Activated CD8-positive, alpha-beta T cell treated with anti-CD3 and anti-CD28 coated beads for 36 hours (primary cell): ENCODE measurements at regions of chr6 and their contacts with region 1.

Region 1: DNA sequence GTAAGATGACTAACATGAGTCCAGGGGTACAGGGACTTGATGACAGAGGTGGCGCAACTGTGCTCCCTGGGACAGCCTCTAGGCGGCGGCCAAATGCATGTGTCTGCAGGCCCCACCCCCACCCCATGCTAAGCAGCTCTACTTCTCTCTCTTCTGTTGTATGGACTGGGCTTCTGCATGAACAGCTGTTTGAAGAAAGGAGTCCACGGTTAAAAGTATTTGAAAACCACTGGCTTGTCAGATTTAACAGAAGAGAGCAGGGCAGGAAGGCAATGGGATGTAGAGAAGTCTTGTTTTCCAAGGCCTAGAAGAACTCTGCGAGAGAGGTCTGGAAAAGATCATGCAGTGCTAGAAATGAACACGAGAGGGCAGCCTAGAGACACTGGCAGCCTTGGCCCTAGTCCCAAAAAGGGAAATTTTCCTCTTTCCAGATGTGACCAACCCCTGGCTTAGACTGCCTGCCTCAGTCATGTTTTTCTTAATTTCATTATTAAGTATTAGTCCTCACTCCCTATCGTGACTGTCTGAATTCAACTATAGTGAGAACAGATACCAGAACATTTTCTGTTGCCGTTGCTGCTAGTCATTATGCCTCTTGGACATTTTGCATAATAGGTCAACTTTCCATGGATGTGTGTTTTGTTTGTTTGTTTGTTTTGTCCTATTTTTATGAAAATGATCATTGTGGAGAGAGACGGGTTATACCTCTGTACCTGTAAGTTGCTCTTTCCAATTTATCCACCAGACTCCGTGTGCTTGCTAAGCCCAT is 265.0 kb downstream of the ADGRG6 start:
- DNase-seq: peak; percentile 68
- ATAC-seq: peak; percentile 66
- H3K4me3 Mint-ChIP-seq: no peak overlapping the region
- H3K27ac Mint-ChIP-seq: no peak overlapping the region
- H3K4me1 Mint-ChIP-seq: peaks cover 53% of the 10 kb centered on the region
- H3K27me3 Mint-ChIP-seq: no peaks in the 10 kb centered on the region
- CTCF ChIP-seq: peak; percentile 93

Region 2: DNA sequence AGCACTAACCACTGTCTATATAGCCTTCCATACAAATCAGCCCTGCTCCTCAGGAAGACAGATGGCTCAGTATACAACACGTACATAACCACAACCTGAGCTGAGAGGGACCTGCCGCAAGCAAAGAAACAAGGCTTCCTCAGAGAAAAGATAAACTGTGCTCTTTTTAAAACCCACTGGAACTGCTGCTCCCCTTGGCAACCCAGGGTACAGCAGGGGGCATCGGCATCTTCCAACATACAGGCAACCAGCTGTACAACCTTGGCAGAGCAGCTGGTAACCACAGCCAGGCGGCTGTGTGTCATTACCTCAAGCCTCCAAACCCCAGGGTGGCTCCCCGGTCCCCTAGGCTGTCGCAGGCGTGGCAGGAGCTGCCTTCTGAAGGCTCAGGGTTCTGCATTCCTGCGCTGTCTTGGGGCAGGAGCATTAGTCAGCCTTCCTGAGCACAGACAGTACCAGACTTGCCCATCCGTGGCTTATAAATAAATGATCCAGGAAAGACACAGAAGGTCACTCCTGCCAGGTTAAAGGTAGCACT is 15.5 kb before region 1 on chr6:
- CTCF ChIA-PET with region 1: interaction called, 36 read pairs
- POLR2A ChIA-PET with region 1: no interaction called
- intact Hi-C with region 1: no loop called
- DNase-seq: peak; percentile 82
- ATAC-seq: peak; percentile 97
- H3K4me3 Mint-ChIP-seq: no peak overlapping the region
- H3K27ac Mint-ChIP-seq: no peak overlapping the region
- H3K4me1 Mint-ChIP-seq: peaks cover 26% of the 10 kb centered on the region
- H3K27me3 Mint-ChIP-seq: no peaks in the 10 kb centered on the region
- CTCF ChIP-seq: no peak

Region 3: GRCh38 chr6:142679907-142680700 is 113.3 kb after region 1 on chr6:
- CTCF ChIA-PET with region 1: interaction called, 3 read pairs
- POLR2A ChIA-PET with region 1: no interaction called
- intact Hi-C with region 1: loop called (anchors 10 kb)
- DNase-seq: peak; percentile 52
- ATAC-seq: peak; percentile 87
- H3K4me3 Mint-ChIP-seq: no peak overlapping the region
- H3K27ac Mint-ChIP-seq: no peak overlapping the region
- H3K4me1 Mint-ChIP-seq: peaks cover 13% of the 10 kb centered on the region
- H3K27me3 Mint-ChIP-seq: peaks cover 1% of the 10 kb centered on the region
- CTCF ChIP-seq: no peak